Natural killer cell (primary cell): ENCODE measurements at regions of chr17 and their contacts with region 1.

Region 1: DNA sequence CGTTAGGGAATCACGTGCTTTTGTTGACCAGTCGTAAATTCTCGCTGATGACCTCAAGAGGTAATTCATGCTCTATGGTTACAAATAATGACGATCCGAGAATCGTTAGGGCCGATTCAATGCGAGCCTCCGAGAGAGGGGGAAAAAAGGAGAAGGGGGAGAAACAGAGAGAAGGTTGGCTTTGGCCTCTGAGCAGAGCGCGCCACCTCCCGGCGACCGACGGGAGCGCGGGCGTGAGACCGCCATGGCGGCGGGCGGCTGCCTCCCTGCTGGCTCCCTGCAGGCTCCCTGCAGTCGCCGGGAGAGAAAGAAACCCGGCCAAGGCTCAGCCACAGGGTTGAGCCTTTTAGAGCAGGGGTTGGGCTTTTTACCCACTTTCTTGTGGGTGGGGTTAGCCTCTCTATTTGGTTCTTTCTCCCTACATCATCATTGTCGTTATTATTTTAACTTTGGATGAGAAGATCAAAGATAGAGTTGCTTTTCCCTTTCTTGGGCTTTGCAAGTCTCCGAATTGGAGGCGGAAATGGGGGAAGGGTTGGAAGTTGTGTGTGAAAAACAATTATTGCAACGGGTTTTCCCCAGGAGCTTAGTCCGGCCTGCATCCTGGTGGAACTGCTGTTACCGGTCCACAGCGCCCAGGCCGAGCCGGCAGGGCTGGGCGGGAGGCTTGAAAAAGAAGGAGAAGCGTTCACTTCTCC is 410 bp upstream of the HOXB5 start:
- DNase-seq: peak; percentile 82 to 90
- ATAC-seq: peak; percentile 74 to 81 (median 75)
- H3K4me3 ChIP-seq: no peak overlapping the region
- H3K4me3 Mint-ChIP-seq: peak overlapping the region; percentile 87
- H3K27ac ChIP-seq: no peak overlapping the region
- H3K27ac Mint-ChIP-seq: peak overlapping the region in 1 of 2 donors; percentile 48
- H3K4me1 ChIP-seq: peaks cover 49% of the 10 kb centered on the region
- H3K4me1 Mint-ChIP-seq: peaks cover 45 to 56% of the 10 kb centered on the region in 2 donors
- H3K27me3 ChIP-seq: peaks cover 69% of the 10 kb centered on the region
- H3K27me3 Mint-ChIP-seq: peaks cover 79 to 87% of the 10 kb centered on the region in 2 donors
- CTCF ChIP-seq: peak; percentile 87

Region 2: DNA sequence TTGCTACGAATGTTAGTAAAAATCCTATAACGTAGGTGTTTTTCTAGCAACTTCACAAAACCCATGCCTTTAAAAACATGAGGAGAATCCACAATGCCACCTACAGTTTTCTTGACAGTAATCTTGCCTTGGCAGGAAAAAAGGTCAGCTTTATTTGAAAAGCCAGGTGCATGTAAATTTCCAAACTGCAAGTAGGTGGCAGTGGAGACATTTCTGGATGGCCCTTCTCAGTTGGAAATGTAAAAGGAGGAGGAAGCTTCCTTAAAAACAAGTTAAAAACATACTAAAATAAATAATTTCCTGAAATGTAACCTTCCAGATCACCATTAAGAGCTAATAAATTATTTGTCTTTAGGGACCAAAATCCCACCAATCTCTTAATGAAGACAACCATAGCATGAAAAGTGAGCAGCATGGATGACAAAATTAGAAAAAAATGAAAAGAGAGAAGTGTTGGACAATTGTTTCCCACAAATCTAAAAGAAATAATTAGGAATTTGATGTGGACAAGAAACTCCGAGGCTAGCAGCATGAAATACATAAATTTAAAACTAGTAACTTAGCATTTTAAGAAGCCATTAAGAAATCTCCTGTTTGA is 334.2 kb before region 1 on chr17:
- intact Hi-C with region 1: loop called (anchors 5 kb)
- DNase-seq: peak in 1 of 2 donors; percentile 34
- ATAC-seq: no peak
- H3K4me3 ChIP-seq: no peak overlapping the region
- H3K4me3 Mint-ChIP-seq: no peak overlapping the region
- H3K27ac ChIP-seq: no peak overlapping the region
- H3K27ac Mint-ChIP-seq: peak overlapping the region; percentile 31 to 59
- H3K4me1 ChIP-seq: peaks cover 2% of the 10 kb centered on the region
- H3K4me1 Mint-ChIP-seq: peaks cover 20 to 47% of the 10 kb centered on the region in 2 donors
- H3K27me3 ChIP-seq: no peaks in the 10 kb centered on the region
- H3K27me3 Mint-ChIP-seq: no peaks in the 10 kb centered on the region
- CTCF ChIP-seq: peak; percentile 18

Region 3: GRCh38 chr17:48335858-48336500 is 258.0 kb before region 1 on chr17:
- intact Hi-C with region 1: loop called (anchors 1 kb)
- DNase-seq: peak in 1 of 2 donors; percentile 80
- ATAC-seq: peak in 2 of 3 donors; percentile 61 to 72
- H3K4me3 ChIP-seq: no peak overlapping the region
- H3K4me3 Mint-ChIP-seq: no peak overlapping the region
- H3K27ac ChIP-seq: no peak overlapping the region
- H3K27ac Mint-ChIP-seq: peak overlapping the region; percentile 79 to 80
- H3K4me1 ChIP-seq: no peaks in the 10 kb centered on the region
- H3K4me1 Mint-ChIP-seq: peaks cover 8 to 10% of the 10 kb centered on the region in 2 donors
- H3K27me3 ChIP-seq: no peaks in the 10 kb centered on the region
- H3K27me3 Mint-ChIP-seq: no peaks in the 10 kb centered on the region
- CTCF ChIP-seq: peak; percentile 79

Region 4: GRCh38 chr17:48610282-48611211 is 16.6 kb after region 1 on chr17 and contains the start of gene HOXB7:
- intact Hi-C with region 1: loop called (anchors 2 kb)
- DNase-seq: peak; percentile 68 to 75
- ATAC-seq: peak; percentile 28 to 59 (median 39)
- H3K4me3 ChIP-seq: peak within 1 kb of the TSS; percentile 85
- H3K4me3 Mint-ChIP-seq: peak within 1 kb of the TSS; percentile 98
- H3K27ac ChIP-seq: peak within 1 kb of the TSS; percentile 31
- H3K27ac Mint-ChIP-seq: peak within 1 kb of the TSS; percentile 43 to 78
- H3K4me1 ChIP-seq: peaks cover 53% of the 10 kb centered on the region
- H3K4me1 Mint-ChIP-seq: peaks cover 43 to 48% of the 10 kb centered on the region in 2 donors
- H3K27me3 ChIP-seq: peaks cover 39% of the 10 kb centered on the region
- H3K27me3 Mint-ChIP-seq: peaks cover 30 to 48% of the 10 kb centered on the region in 2 donors
- CTCF ChIP-seq: no peak
- total RNA-seq, gene HOXB7: 0.45 to 1.4 (median 0.97) TPM

Region 5: GRCh38 chr17:48753794-48754499 is 160.0 kb after region 1 on chr17:
- intact Hi-C with region 1: no loop called
- DNase-seq: no peak
- ATAC-seq: no peak
- H3K4me3 ChIP-seq: no peak overlapping the region
- H3K4me3 Mint-ChIP-seq: no peak overlapping the region
- H3K27ac ChIP-seq: no peak overlapping the region
- H3K27ac Mint-ChIP-seq: no peak overlapping the region
- H3K4me1 ChIP-seq: peaks cover 13% of the 10 kb centered on the region
- H3K4me1 Mint-ChIP-seq: peaks cover 0 to 5% of the 10 kb centered on the region in 2 donors
- H3K27me3 ChIP-seq: peaks cover 65% of the 10 kb centered on the region
- H3K27me3 Mint-ChIP-seq: peaks cover 69 to 72% of the 10 kb centered on the region in 2 donors
- CTCF ChIP-seq: no peak